Gastrocnemius medialis (tissue), 4 donors: ENCODE measurements at regions of chr2 and their contacts with region 1.

Region 1: GRCh38 chr2:105943977-105944376 is 199.3 kb downstream of the NCK2 start:
- DNase-seq: no peak
- ATAC-seq: no peak
- H3K4me3 ChIP-seq: no peak overlapping the region
- H3K27ac ChIP-seq: no peak overlapping the region
- H3K4me1 ChIP-seq: no peaks in the 10 kb centered on the region
- H3K27me3 ChIP-seq: no peaks in the 10 kb centered on the region
- CTCF ChIP-seq: no peak
- POLR2A ChIP-seq: no peak

Region 2: GRCh38 chr2:104641786-104642185 is 1302.2 kb before region 1 on chr2:
- in situ Hi-C with region 1: no loop called
- intact Hi-C with region 1: loop called (anchors 10 kb)
- DNase-seq: no peak
- ATAC-seq: no peak
- H3K4me3 ChIP-seq: no peak overlapping the region
- H3K27ac ChIP-seq: no peak overlapping the region
- H3K4me1 ChIP-seq: no peaks in the 10 kb centered on the region
- H3K27me3 ChIP-seq: no peaks in the 10 kb centered on the region
- CTCF ChIP-seq: no peak
- POLR2A ChIP-seq: no peak

Region 3: GRCh38 chr2:106104332-106105062 is 160.5 kb after region 1 on chr2:
- in situ Hi-C with region 1: no loop called
- intact Hi-C with region 1: no loop called
- DNase-seq: peak in 1 of 2 donors; percentile 41
- ATAC-seq: peak; percentile 55 to 59
- H3K4me3 ChIP-seq: no peak overlapping the region
- H3K27ac ChIP-seq: no peak overlapping the region
- H3K4me1 ChIP-seq: peaks cover 6 to 10% of the 10 kb centered on the region in 2 donors
- H3K27me3 ChIP-seq: no peaks in the 10 kb centered on the region
- CTCF ChIP-seq: peak; percentile 78 to 96 (median 89)
- POLR2A ChIP-seq: no peak